Adrenal gland (tissue), 19 donors: ENCODE measurements at regions of chr2 and their contacts with region 1.

Region 1: GRCh38 chr2:8681786-8682692 is at the start of gene ID2:
- DNase-seq: peak; percentile 99 to 100 (median 99)
- H3K4me3 ChIP-seq: peak within 1 kb of the TSS; percentile 70 to 100 (median 82)
- H3K27ac ChIP-seq: peak within 1 kb of the TSS; percentile 74 to 97 (median 95)
- H3K4me1 ChIP-seq: peaks cover 23 to 32% of the 10 kb centered on the region in 2 donors
- H3K27me3 ChIP-seq: no peaks in the 10 kb centered on the region
- CTCF ChIP-seq: peak in 1 of 6 experiments; percentile 19
- POLR2A ChIP-seq: peak; percentile 100
- total RNA-seq, gene ID2: 80.7 to 468 (median 223) TPM

Region 2: DNA sequence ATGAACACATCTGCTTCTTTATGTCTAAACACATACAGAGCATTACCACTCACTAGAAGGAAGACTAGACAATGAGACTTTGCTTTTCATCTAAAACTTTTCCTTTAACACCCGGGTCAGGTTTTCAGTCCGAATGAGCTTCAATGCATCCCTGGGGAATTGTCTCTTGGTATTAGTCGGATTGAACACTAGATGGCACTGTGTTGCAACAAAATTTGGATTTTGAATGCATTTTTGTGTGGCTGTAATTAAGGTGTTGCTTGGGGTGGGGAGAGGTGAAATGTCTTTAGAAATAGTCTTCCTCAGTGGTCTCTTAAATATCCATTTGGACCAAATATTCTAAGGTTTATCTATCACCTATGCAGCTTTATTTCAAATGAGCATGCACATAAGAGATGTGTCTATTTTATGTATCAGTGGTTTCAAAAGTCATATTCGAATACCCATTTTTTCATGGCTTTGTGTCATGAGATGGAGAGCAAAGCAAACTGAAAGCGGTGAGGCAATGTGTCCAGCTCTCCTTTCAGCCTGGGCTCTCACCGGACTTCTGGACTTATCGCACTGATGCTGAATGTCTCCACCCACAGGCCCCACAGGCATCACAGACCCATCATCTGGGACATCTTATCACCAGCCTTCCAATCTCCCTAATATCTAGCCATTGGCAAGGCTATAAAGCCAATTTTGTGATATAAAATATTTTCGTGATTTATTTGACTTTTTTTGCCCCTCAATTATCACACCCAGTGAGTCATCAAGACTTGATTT is 1254.6 kb before region 1 on chr2:
- intact Hi-C with region 1: loop called (anchors 5 kb)
- DNase-seq: peak in 4 of 7 donors; percentile 17 to 25 (median 24)
- H3K4me3 ChIP-seq: no peak overlapping the region
- H3K27ac ChIP-seq: no peak overlapping the region
- H3K4me1 ChIP-seq: peaks cover 0 to 3% of the 10 kb centered on the region in 2 donors
- H3K27me3 ChIP-seq: no peaks in the 10 kb centered on the region
- CTCF ChIP-seq: peak; percentile 55 to 81 (median 73)
- POLR2A ChIP-seq: no peak

Region 3: GRCh38 chr2:7725171-7725849 is 956.7 kb before region 1 on chr2:
- intact Hi-C with region 1: loop called in 1 of 2 experiments (anchors 5 kb)
- DNase-seq: peak in 2 of 7 donors; percentile 9 to 14
- H3K4me3 ChIP-seq: no peak overlapping the region
- H3K27ac ChIP-seq: no peak overlapping the region
- H3K4me1 ChIP-seq: no peaks in the 10 kb centered on the region
- H3K27me3 ChIP-seq: no peaks in the 10 kb centered on the region
- CTCF ChIP-seq: peak in 4 of 6 experiments; percentile 19 to 41 (median 36)
- POLR2A ChIP-seq: no peak

Region 4: DNA sequence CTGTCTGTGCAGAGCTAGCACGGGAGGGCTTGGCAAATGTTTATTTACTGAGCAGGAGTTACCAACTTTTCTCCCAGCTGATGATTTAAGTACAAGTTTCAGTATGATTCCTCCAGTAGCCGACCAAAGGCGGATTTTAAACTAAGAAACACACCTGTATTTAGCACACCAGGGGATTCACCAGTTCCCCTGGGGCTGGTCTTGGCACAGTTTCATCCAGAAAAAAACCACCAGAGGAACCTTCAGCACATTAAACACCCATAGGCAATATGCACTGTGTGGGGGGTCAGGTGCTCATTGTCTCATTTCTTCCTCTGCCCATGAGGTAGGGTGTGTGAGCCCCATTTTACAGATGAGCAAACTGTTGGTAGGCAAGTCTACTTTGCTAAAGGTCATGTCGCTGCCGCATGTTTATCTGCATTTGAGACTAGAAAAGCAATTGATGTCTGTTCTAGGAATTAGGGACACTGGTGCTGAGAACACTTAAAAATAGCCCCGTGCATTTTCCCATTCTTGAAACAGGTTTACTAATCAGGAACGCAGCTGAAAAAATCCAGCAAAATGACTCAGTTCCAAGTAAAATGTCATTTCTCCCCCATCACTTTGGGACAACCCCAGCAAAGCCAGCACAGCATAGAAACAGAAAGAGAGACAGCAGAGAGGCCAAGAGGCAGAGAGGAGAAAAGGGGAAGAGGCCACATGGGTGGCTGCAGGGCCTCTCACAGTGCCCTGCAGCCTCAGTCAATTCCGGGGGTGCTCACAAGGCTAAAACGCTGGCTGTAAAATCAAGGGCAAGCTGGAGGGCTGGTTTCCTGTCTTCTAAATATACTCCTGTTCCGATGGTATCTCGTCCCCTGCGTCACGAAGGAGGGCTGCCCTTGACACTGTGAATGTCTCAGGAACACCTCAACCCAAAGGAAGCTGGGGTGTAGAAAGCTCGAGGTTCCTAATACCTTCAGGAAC is 167.0 kb before region 1 on chr2:
- intact Hi-C with region 1: loop called (anchors 10 kb)
- DNase-seq: peak; percentile 58 to 87 (median 74)
- H3K4me3 ChIP-seq: peak overlapping the region in 1 of 4 donors; percentile 7
- H3K27ac ChIP-seq: peak overlapping the region in 3 of 5 donors; percentile 6 to 83 (median 63)
- H3K4me1 ChIP-seq: peaks cover 10 to 11% of the 10 kb centered on the region in 2 donors
- H3K27me3 ChIP-seq: no peaks in the 10 kb centered on the region
- CTCF ChIP-seq: no peak
- POLR2A ChIP-seq: no peak

Region 5: GRCh38 chr2:8525582-8526402 is 156.2 kb before region 1 on chr2:
- intact Hi-C with region 1: loop called in 1 of 2 experiments (anchors 10 kb)
- DNase-seq: peak; percentile 60 to 88 (median 80)
- H3K4me3 ChIP-seq: no peak overlapping the region
- H3K27ac ChIP-seq: peak overlapping the region in 2 of 5 donors; percentile 34 to 64
- H3K4me1 ChIP-seq: peaks cover 0 to 19% of the 10 kb centered on the region in 2 donors
- H3K27me3 ChIP-seq: no peaks in the 10 kb centered on the region
- CTCF ChIP-seq: peak in 4 of 6 experiments; percentile 15 to 43 (median 34)
- POLR2A ChIP-seq: no peak